Naive thymus-derived CD4-positive, alpha-beta T cell (primary cell): ENCODE measurements at regions of chr16 and their contacts with region 1.

Region 1: DNA sequence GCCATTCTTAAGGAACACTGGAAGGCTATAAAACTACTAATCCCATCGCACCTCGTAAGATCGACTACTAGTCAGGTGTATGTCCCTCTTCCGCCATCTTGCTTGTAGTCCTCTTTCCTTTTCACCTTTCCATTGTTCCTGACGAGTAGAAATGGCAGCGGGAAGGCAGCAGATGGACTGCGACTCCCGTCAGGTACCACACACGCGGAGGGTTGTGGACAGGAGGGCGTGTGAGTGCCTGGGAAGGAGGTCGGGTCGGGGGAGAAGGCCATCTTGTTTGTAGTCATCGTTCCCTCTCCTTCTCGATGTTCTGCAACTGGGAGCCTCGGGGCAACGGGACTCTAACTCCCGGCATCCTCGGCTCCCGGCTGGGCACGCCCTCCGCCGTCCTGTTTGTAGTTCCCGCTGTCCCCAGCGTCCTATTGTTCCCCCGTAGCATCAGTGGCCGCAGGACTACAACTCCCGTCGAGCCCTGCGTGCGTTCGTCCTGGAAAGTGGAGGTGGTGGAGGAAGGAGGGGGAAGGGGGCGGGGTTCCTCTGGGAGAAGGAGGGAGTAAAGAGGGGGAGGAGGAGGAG is 324 bp upstream of the FBXL19 start:
- DNase-seq: peak; percentile 74 to 97 (median 95)
- ATAC-seq: peak; percentile 79
- H3K4me3 ChIP-seq: peak overlapping the region; percentile 72
- H3K4me3 Mint-ChIP-seq: peak overlapping the region; percentile 89 to 100 (median 99)
- H3K27ac ChIP-seq: peak overlapping the region; percentile 91
- H3K27ac Mint-ChIP-seq: peak overlapping the region; percentile 92 to 100 (median 99)
- H3K4me1 ChIP-seq: no peaks in the 10 kb centered on the region
- H3K4me1 Mint-ChIP-seq: peaks cover 0 to 32% (median 15%) of the 10 kb centered on the region in 7 donors
- H3K27me3 ChIP-seq: no peaks in the 10 kb centered on the region
- H3K27me3 Mint-ChIP-seq: peaks cover 0 to 3% (median 0%) of the 10 kb centered on the region in 5 donors

Region 2: DNA sequence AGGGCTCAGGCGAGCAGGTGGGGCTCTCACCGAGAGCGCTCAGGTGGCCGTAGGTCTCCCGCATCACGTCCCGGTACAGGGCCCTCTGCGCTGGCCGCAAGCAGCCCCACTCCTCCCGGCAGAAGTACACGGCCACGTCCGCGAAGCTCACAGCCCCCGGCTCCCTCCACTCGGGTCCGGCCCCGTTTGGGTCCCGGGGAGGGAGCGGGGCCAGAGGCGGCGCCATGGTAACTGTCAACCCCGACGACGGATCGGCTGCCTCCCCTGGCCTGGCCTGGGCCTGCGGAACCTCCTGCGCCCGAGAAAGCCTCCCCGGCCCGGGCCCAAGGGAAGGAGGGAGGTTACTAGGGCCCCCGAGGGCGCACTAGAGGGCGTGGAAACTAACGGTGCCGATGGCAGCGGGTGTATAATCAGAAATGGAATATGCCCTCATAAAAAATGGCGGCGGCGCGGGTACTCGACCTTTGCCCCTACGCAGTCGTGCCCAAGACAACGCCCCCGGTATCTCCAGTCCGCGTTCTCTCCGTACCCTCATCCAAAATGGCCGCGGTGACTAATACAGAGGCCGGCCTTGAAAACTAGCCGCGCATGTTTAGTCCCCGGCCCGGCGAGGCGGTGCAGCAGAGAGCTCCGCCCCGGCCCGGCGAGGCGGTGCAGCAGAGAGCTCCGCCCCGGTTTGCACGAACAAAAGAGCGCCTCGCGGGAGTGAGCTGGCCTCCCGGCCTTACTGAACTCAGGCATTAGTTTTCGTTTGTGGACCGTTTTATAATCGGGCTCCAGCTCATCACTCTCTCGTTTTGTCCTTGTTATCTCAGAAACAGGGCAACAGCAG is 364.9 kb before region 1 on chr16 and contains the start of gene ZNF764:
- CTCF ChIA-PET with region 1: no interaction called
- POLR2A ChIA-PET with region 1: no interaction called
- intact Hi-C with region 1: loop called in 1 of 2 experiments (anchors 5 kb)
- DNase-seq: peak; percentile 79 to 95 (median 91)
- ATAC-seq: peak; percentile 95
- H3K4me3 ChIP-seq: peak within 1 kb of the TSS; percentile 92
- H3K4me3 Mint-ChIP-seq: peak within 1 kb of the TSS; percentile 83 to 92 (median 90)
- H3K27ac ChIP-seq: peak within 1 kb of the TSS; percentile 99
- H3K27ac Mint-ChIP-seq: peak within 1 kb of the TSS; percentile 87 to 94 (median 92)
- H3K4me1 ChIP-seq: peaks cover 12 to 15% of the 10 kb centered on the region in 2 donors
- H3K4me1 Mint-ChIP-seq: peaks cover 33 to 58% (median 43%) of the 10 kb centered on the region in 7 donors
- H3K27me3 ChIP-seq: no peaks in the 10 kb centered on the region
- H3K27me3 Mint-ChIP-seq: no peaks in the 10 kb centered on the region
- total RNA-seq, gene ZNF764: 11.9 to 20.9 (median 19.3) TPM

Region 3: DNA sequence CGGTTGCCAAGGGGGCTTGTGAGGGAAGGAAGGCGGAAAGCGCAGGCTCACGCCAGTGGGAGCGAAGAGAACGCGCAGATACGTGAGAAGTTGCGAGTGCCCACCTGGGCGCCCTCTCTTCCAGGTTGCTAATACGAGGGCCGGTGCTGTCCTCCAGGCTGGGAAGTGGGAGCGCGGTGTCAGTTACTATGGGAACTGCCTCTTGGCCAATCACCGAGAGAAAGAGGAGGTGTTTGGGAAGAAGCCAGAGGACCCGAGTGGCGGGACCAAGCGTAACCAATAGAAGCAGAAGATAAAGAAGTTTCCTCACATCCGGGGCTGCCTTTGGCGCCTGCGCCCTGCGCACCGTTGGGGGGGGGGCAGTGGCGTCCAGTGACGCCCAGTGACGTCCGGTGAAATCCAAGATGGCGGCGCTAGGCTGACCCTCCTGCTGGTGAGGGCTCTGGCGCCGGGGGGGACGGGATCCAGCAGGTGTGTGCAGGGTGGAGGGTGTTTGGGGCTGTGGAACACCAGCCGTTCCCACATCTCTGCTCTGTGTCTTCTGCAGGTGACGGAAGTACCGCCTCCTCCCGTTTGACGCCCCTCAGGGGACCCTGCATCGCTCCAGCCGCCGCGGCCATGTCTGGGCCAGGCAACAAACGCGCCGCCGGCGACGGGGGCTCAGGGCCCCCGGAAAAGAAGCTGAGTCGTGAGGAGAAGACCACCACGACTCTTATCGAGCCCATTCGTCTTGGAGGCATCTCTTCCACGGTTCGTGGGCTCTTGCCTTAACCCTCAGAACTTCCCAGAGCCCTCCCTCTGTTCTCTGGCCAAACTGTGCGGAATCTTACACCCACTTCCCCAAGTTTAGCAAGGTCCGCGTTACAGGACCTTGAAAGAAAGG is 160.9 kb before region 1 on chr16 and contains the starts of genes CFAP119 and RNF40:
- CTCF ChIA-PET with region 1: no interaction called
- POLR2A ChIA-PET with region 1: no interaction called
- intact Hi-C with region 1: loop called (anchors 1 kb)
- DNase-seq: peak; percentile 73 to 97 (median 88)
- ATAC-seq: peak; percentile 96
- H3K4me3 ChIP-seq: peak within 1 kb of the TSS; percentile 99
- H3K4me3 Mint-ChIP-seq: peak within 1 kb of the TSS; percentile 96 to 98 (median 97)
- H3K27ac ChIP-seq: peak within 1 kb of the TSS; percentile 88
- H3K27ac Mint-ChIP-seq: peak within 1 kb of the TSS; percentile 82 to 96 (median 93)
- H3K4me1 ChIP-seq: peaks cover 17 to 31% of the 10 kb centered on the region in 2 donors
- H3K4me1 Mint-ChIP-seq: peaks cover 21 to 41% (median 32%) of the 10 kb centered on the region in 7 donors
- H3K27me3 ChIP-seq: no peaks in the 10 kb centered on the region
- H3K27me3 Mint-ChIP-seq: no peaks in the 10 kb centered on the region
- total RNA-seq, gene CFAP119: 2.3 to 5.9 (median 2.9) TPM
- total RNA-seq, gene RNF40: 68.7 to 122 (median 114) TPM

Region 4: DNA sequence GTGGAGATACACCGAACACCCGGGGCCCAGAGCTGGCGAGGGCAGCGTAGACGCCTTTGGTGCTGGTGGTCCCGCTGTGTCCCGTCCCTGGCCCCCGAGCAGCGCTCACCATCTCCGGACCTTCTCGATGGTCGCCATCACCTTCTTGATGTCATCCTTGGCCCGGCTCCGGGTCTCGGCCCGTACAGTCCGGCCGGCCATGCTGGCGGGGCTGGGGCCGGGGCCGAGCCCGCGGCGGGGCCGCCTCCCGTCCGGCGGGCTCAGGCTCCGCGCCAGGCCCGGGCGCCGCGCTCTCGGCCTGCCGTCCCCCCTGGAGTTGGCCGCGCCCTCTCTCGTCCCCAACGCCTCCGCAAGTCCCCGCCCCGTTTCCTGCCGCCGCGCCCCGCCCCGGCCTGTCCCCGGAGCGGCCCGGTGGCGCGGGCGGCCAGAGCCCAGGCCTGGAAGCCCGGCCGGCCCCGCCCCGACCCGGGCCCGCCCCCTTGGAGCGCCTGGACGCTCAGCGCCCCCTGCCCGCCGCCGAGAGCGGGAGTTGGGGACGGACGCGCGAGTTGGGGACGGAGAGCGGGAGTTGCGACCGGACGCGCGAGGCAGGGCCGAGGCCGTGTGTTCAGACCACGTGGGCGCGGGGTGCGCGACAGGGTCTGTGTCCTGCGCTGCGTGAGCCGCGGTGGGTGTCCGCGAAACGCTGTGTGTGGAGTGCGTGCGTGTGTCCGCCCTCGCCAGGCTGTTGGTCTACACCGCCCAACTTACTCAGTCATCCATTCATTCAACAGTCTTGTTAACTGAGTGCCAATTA is 29.1 kb before region 1 on chr16 and contains the start of gene BCL7C:
- CTCF ChIA-PET with region 1: interaction called, 4 read pairs
- POLR2A ChIA-PET with region 1: no interaction called
- intact Hi-C with region 1: loop called (anchors 1 kb)
- DNase-seq: peak; percentile 48 to 96 (median 61)
- ATAC-seq: peak; percentile 85
- H3K4me3 ChIP-seq: peak within 1 kb of the TSS; percentile 82
- H3K4me3 Mint-ChIP-seq: peak within 1 kb of the TSS; percentile 84 to 96 (median 90)
- H3K27ac ChIP-seq: peak within 1 kb of the TSS; percentile 82
- H3K27ac Mint-ChIP-seq: peak within 1 kb of the TSS; percentile 80 to 94 (median 91)
- H3K4me1 ChIP-seq: peaks cover 25 to 34% of the 10 kb centered on the region in 2 donors
- H3K4me1 Mint-ChIP-seq: peaks cover 26 to 60% (median 48%) of the 10 kb centered on the region in 7 donors
- H3K27me3 ChIP-seq: no peaks in the 10 kb centered on the region
- H3K27me3 Mint-ChIP-seq: no peaks in the 10 kb centered on the region
- total RNA-seq, gene BCL7C: 17.2 to 23.7 (median 22.7) TPM

Region 5: DNA sequence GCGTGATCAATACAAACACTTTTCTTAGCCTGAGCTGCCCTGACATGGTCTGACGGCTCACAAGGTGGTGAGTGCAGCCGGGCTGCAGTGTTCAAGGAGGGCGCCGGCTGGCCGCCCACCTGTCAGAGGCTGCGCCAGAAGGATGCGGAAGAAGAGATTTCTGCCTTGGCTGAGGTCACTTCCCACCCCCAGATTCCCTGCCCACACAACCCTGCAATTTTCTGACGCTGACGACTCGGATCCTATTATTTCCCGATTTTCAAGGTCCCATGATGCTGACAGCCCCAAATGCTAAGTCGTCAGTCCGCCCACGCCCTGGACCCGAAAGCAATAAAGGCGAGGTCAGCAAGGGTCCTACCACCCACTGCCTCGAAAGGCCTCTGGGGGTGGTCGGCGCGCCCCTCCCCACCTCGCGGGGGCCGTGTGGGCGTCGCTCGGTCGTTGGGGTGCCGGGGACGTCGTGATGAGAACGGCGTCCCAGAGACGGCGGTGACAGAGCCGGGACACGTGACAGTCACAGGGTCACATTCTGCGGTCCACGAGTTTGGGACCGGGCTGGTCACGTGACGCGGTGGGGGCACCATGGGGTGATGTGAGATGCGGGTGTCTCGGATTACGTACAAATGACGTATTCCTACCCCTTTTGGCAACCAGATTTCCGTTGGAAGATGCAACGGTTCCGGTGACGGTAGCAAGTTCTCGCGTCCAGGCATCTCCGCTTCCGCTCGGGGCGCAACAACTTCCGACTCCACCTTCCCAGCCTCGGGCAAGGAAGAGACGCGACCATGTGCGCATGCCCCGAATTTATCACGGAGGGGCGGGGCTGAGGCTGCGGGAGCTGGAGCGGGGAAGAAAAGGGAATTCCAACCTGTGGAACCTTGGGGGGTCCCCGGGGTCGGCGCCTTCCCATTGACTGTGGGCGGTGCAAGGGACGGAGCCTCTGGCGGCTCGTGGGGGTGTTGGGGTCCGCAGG is 110.0 kb after region 1 on chr16 and contains the start of gene STX4:
- CTCF ChIA-PET with region 1: no interaction called
- POLR2A ChIA-PET with region 1: no interaction called
- intact Hi-C with region 1: loop called (anchors 1 kb)
- DNase-seq: peak; percentile 90 to 100 (median 97)
- ATAC-seq: peak; percentile 89
- H3K4me3 ChIP-seq: peak within 1 kb of the TSS; percentile 82
- H3K4me3 Mint-ChIP-seq: peak within 1 kb of the TSS; percentile 78 to 100 (median 96)
- H3K27ac ChIP-seq: peak within 1 kb of the TSS; percentile 93
- H3K27ac Mint-ChIP-seq: peak within 1 kb of the TSS; percentile 84 to 99 (median 97)
- H3K4me1 ChIP-seq: peaks cover 14 to 16% of the 10 kb centered on the region in 2 donors
- H3K4me1 Mint-ChIP-seq: peaks cover 15 to 35% (median 22%) of the 10 kb centered on the region in 7 donors
- H3K27me3 ChIP-seq: no peaks in the 10 kb centered on the region
- H3K27me3 Mint-ChIP-seq: peaks cover 0 to 3% (median 0%) of the 10 kb centered on the region in 5 donors
- total RNA-seq, gene STX4: 77.9 to 114 (median 100) TPM

Region 6: GRCh38 chr16:31179747-31180459 is 256.9 kb after region 1 on chr16 and contains the start of gene FUS:
- CTCF ChIA-PET with region 1: no interaction called
- POLR2A ChIA-PET with region 1: interaction called, 3 read pairs
- intact Hi-C with region 1: loop called in 1 of 2 experiments (anchors 1 kb)
- DNase-seq: peak; percentile 88 to 97 (median 95)
- ATAC-seq: peak; percentile 87
- H3K4me3 ChIP-seq: peak within 1 kb of the TSS; percentile 76
- H3K4me3 Mint-ChIP-seq: peak within 1 kb of the TSS; percentile 92 to 99 (median 96)
- H3K27ac ChIP-seq: peak within 1 kb of the TSS; percentile 90
- H3K27ac Mint-ChIP-seq: peak within 1 kb of the TSS; percentile 96 to 100 (median 99)
- H3K4me1 ChIP-seq: peaks cover 56% of the 10 kb centered on the region in 2 donors
- H3K4me1 Mint-ChIP-seq: peaks cover 49 to 72% (median 56%) of the 10 kb centered on the region in 7 donors
- H3K27me3 ChIP-seq: no peaks in the 10 kb centered on the region
- H3K27me3 Mint-ChIP-seq: peaks cover 0 to 3% (median 0%) of the 10 kb centered on the region in 5 donors
- total RNA-seq, gene FUS: 597 to 956 (median 714) TPM